H1 (cell line): ENCODE measurements at regions of chr12 and their contacts with region 1.

Region 1: DNA sequence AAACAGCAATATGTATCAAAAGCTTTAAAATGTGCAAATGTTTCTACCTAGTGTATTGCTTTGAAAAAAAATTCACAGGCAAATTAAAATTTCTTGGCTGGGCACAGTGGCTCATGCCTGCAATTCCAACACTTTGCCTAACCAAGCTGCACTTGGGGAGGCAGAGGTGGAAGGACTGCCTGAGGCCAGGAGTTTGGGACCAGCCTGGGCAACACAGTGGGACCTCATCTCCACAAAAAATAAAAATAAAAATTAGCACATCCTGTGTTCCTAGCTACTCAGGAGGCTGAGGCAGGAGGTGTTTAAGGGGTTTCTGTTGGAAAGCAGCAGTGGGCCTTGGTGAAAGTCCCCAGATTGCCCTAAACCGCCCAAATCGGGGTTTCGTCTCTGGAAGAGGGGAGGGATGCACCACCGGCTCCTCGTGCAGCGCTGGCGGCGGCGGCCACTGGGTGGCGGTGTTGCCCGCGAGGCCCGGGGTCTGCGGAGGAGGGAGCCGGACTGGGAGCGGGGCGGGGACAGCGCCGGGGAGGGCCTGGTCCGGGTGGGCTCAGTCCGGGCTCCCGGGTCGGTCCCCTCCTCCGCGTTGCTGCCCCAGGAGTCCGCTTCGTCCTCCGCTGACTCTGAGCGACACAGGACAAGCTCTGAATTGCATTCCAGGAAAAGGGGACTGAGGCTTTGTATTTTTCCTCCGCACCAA is 265.6 kb downstream of the AACS start:
- DNase-seq: peak in 1 of 2 experiments; percentile 98
- H3K4me3 ChIP-seq: peak overlapping the region; percentile 47 to 71 (median 68)
- H3K27ac ChIP-seq: no peak overlapping the region; the same call in 1 of the 2 replicates
- H3K4me1 ChIP-seq: peaks cover 8 to 16% (median 14%) of the 10 kb centered on the region in 4 experiments
- H3K27me3 ChIP-seq: no peaks in the 10 kb centered on the region
- CTCF ChIP-seq: peak; percentile 85 to 96 (median 93)
- EP300 ChIP-seq: no peak
- POLR2A ChIP-seq: no peak
- RAD21 ChIP-seq: peak; percentile 85 to 88

Region 2: DNA sequence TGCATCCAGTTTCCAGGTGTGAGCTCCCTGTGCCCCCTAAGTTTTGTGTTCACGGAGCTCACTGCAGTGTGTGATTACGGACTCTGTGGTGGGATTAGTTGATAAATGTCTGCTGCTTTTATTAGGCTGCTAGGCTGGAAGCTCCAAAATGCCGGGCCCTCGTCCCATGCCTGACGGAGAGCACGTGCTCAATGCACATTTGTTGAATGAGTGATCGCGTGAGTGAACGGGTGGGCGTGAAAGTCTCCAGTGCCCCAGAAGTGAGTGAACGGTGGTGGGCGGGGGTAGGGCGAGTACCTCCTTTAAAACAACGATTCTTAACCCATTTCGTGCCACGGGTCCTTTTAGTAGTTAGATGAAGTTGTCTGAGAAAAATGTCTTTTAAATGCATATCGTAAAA is 90.1 kb before region 1 on chr12:
- CTCF ChIA-PET with region 1: interaction called, 43 read pairs
- POLR2A ChIA-PET with region 1: no interaction called
- DNase-seq: no peak
- H3K4me3 ChIP-seq: no peak overlapping the region
- H3K27ac ChIP-seq: no peak overlapping the region
- H3K4me1 ChIP-seq: peaks cover 2 to 12% (median 4%) of the 10 kb centered on the region in 4 experiments; a peak in 6 of 7 replicates
- H3K27me3 ChIP-seq: no peaks in the 10 kb centered on the region
- CTCF ChIP-seq: no peak
- EP300 ChIP-seq: no peak
- POLR2A ChIP-seq: no peak
- RAD21 ChIP-seq: no peak

Region 3: GRCh38 chr12:125314051-125314755 is 16.6 kb before region 1 on chr12:
- CTCF ChIA-PET with region 1: interaction called, 47 read pairs
- POLR2A ChIA-PET with region 1: interaction called, 4 read pairs
- DNase-seq: no peak
- H3K4me3 ChIP-seq: no peak overlapping the region
- H3K27ac ChIP-seq: no peak overlapping the region
- H3K4me1 ChIP-seq: peaks cover 3 to 17% (median 8%) of the 10 kb centered on the region in 4 experiments
- H3K27me3 ChIP-seq: no peaks in the 10 kb centered on the region
- CTCF ChIP-seq: no peak
- EP300 ChIP-seq: no peak
- POLR2A ChIP-seq: no peak
- RAD21 ChIP-seq: no peak

Region 4: DNA sequence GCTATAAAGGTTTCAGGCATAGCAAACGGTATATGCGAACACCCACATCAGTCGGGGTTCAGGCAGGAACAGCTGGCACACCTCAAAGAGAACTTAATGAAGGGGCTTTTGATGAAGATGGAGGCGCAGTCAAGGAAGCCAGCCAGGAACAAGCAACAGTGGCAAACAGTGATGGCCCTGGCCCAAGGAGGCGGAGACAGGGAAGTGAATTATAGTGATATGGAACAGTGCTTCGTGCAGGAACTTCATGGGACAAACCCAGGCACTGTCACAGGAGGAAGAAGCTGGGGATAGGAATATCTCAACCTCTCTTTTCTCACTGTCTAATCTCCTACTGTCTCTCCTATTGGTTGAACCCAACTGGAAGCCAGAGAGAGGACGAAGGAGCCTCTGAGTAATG is 62.8 kb after region 1 on chr12:
- CTCF ChIA-PET with region 1: interaction called, 85 read pairs
- POLR2A ChIA-PET with region 1: no interaction called
- DNase-seq: no peak
- H3K4me3 ChIP-seq: no peak overlapping the region
- H3K27ac ChIP-seq: no peak overlapping the region
- H3K4me1 ChIP-seq: no peaks in the 10 kb centered on the region
- H3K27me3 ChIP-seq: no peaks in the 10 kb centered on the region
- CTCF ChIP-seq: no peak
- EP300 ChIP-seq: no peak
- POLR2A ChIP-seq: no peak
- RAD21 ChIP-seq: no peak

Region 5: GRCh38 chr12:125443341-125443740 is 112.5 kb after region 1 on chr12:
- CTCF ChIA-PET with region 1: no interaction called
- POLR2A ChIA-PET with region 1: no interaction called
- DNase-seq: no peak
- H3K4me3 ChIP-seq: no peak overlapping the region
- H3K27ac ChIP-seq: no peak overlapping the region
- H3K4me1 ChIP-seq: peaks cover 0 to 4% (median 0%) of the 10 kb centered on the region in 4 experiments; a peak in 4 of 7 replicates
- H3K27me3 ChIP-seq: peaks cover 0 to 1% (median 0%) of the 10 kb centered on the region in 4 experiments; a peak in 1 of 7 replicates
- CTCF ChIP-seq: no peak
- EP300 ChIP-seq: no peak
- POLR2A ChIP-seq: no peak
- RAD21 ChIP-seq: no peak